GM12878 (cell line): ENCODE measurements at regions of chr7 and their contacts with region 1.

Region 1: GRCh38 chr7:101856473-101857357 is 39.3 kb downstream of the CUX1 start:
- DNase-seq: peak; percentile 95
- ATAC-seq: peak; percentile 96
- H3K4me3 ChIP-seq: peak overlapping the region; percentile 33; the same call in 1 of the 2 replicates
- H3K27ac ChIP-seq: peak overlapping the region; percentile 84
- H3K4me1 ChIP-seq: peaks cover 47% of the 10 kb centered on the region
- H3K27me3 ChIP-seq: no peaks in the 10 kb centered on the region
- CTCF ChIP-seq: peak; percentile 31 to 53 (median 39); a peak in 5 of 6 replicates
- EP300 ChIP-seq: peak in 1 of 2 experiments; percentile 72; a peak in 1 of 4 replicates
- POLR2A ChIP-seq: peak; percentile 58
- RAD21 ChIP-seq: peak; percentile 29; the same call in 1 of the 2 replicates

Region 2: DNA sequence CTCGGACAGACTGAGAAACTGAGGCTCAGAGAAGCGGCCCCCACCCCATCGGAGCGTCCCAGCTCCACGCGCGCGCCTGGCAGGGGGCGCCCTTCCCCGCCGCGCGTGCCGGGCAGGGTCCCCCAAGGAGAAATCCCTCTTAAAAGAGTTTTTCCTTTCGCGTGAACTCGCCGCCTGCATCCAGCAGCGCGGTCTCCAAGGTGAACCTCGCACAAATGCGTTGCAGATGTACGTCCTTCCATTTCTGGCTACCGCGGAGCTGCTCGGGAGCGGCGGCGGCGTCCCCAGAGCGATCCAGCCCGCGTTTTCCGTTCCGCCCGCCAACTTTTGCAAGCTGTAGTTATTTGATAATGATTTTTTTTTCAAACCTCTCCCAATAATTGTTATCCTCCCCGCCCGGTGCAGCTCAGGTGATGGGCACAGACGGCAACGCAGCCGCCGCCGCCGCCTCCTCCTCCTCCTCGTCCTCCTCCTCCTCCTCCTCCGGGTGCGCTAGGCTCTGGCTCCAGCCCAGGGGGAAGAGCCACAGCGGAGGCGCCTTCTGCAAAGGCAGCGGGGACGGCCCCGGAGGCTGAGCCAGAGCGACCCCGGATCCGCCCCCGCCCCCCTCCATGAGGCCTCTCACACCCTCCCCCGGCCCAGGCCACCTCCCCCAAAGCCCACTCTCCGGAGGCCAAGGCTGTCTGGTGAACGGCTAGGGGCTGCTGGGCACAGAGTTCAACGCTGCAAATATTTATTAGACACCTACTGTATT is 113.3 kb before region 1 on chr7:
- CTCF ChIA-PET with region 1: interaction called, 7 read pairs
- POLR2A ChIA-PET with region 1: no interaction called
- RAD21 ChIA-PET with region 1: no interaction called
- SMC1A ChIA-PET with region 1: interaction called, 4 read pairs
- in situ Hi-C with region 1: no loop called
- intact Hi-C with region 1: loop called (anchors 5 kb)
- DNase-seq: no peak
- ATAC-seq: peak; percentile 57
- H3K4me3 ChIP-seq: peak overlapping the region; percentile 79
- H3K27ac ChIP-seq: peak overlapping the region; percentile 76
- H3K4me1 ChIP-seq: peaks cover 68% of the 10 kb centered on the region
- H3K27me3 ChIP-seq: no peaks in the 10 kb centered on the region
- CTCF ChIP-seq: peak; percentile 42 to 51 (median 49); a peak in 5 of 6 replicates
- EP300 ChIP-seq: no peak
- POLR2A ChIP-seq: no peak
- RAD21 ChIP-seq: peak; percentile 6; the same call in 1 of the 2 replicates

Region 3: GRCh38 chr7:101936611-101937231 is 80.0 kb after region 1 on chr7:
- CTCF ChIA-PET with region 1: interaction called, 4 read pairs
- POLR2A ChIA-PET with region 1: interaction called, 5 read pairs
- RAD21 ChIA-PET with region 1: interaction called, 6 read pairs
- SMC1A ChIA-PET with region 1: interaction called, 12 read pairs
- in situ Hi-C with region 1: no loop called
- intact Hi-C with region 1: loop called (anchors 2 kb)
- DNase-seq: no peak
- ATAC-seq: no peak
- H3K4me3 ChIP-seq: no peak overlapping the region
- H3K27ac ChIP-seq: no peak overlapping the region
- H3K4me1 ChIP-seq: peaks cover 63% of the 10 kb centered on the region
- H3K27me3 ChIP-seq: no peaks in the 10 kb centered on the region
- CTCF ChIP-seq: no peak
- EP300 ChIP-seq: no peak
- POLR2A ChIP-seq: no peak
- RAD21 ChIP-seq: no peak

Region 4: DNA sequence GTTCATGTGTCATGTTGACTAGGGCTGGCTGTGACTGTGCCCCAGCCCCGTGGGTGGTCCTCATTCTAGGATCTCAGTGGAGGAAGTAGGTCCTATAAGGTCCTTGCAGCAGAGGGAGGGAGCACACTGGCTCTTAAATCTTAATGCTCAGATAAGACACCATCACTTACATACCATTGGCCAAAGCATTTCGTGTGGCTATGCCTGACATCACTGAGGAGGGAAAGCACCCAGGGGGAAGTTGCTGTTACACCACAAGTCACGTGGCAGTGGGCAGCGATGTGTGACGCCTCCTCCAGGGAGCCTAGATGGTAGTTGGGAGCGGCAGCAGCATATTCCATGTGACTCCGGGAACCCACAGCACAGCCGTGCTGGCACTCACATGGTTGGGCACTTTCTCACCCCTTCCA is 205.3 kb after region 1 on chr7:
- CTCF ChIA-PET with region 1: interaction called, 5 read pairs
- POLR2A ChIA-PET with region 1: interaction called, 3 read pairs
- RAD21 ChIA-PET with region 1: interaction called, 3 read pairs
- SMC1A ChIA-PET with region 1: interaction called, 5 read pairs
- in situ Hi-C with region 1: no loop called
- intact Hi-C with region 1: loop called (anchors 5 kb)
- DNase-seq: peak; percentile 82
- ATAC-seq: peak; percentile 99
- H3K4me3 ChIP-seq: no peak overlapping the region; the same call in 1 of the 2 replicates
- H3K27ac ChIP-seq: peak overlapping the region; percentile 65
- H3K4me1 ChIP-seq: peaks cover 35% of the 10 kb centered on the region
- H3K27me3 ChIP-seq: no peaks in the 10 kb centered on the region
- CTCF ChIP-seq: no peak
- EP300 ChIP-seq: peak; percentile 76 to 83; a peak in 3 of 4 replicates
- POLR2A ChIP-seq: peak; percentile 37; the same call in 1 of the 2 replicates
- RAD21 ChIP-seq: no peak

Region 5: GRCh38 chr7:102236592-102237287 is 380.0 kb after region 1 on chr7:
- CTCF ChIA-PET with region 1: interaction called, 15 read pairs
- POLR2A ChIA-PET with region 1: interaction called, 3 read pairs
- RAD21 ChIA-PET with region 1: no interaction called
- SMC1A ChIA-PET with region 1: interaction called, 9 read pairs
- in situ Hi-C with region 1: no loop called
- intact Hi-C with region 1: no loop called
- DNase-seq: no peak
- ATAC-seq: peak; percentile 91
- H3K4me3 ChIP-seq: no peak overlapping the region
- H3K27ac ChIP-seq: no peak overlapping the region
- H3K4me1 ChIP-seq: peaks cover 8% of the 10 kb centered on the region
- H3K27me3 ChIP-seq: no peaks in the 10 kb centered on the region
- CTCF ChIP-seq: peak; percentile 70 to 91 (median 77)
- EP300 ChIP-seq: no peak
- POLR2A ChIP-seq: no peak
- RAD21 ChIP-seq: peak; percentile 98